Heart left ventricle (tissue), 16 donors: ENCODE measurements at regions of chr5 and their contacts with region 1.

Region 1: GRCh38 chr5:16446993-16447392 is 18.6 kb downstream of the ZNF622 start:
- DNase-seq: no peak
- ATAC-seq: no peak
- H3K4me3 ChIP-seq: no peak overlapping the region
- H3K27ac ChIP-seq: no peak overlapping the region
- H3K4me1 ChIP-seq: no peaks in the 10 kb centered on the region
- H3K27me3 ChIP-seq: no peaks in the 10 kb centered on the region
- CTCF ChIP-seq: no peak
- POLR2A ChIP-seq: no peak

Region 2: GRCh38 chr5:15510831-15511230 is 936.2 kb before region 1 on chr5:
- intact Hi-C with region 1: no loop called
- DNase-seq: no peak
- ATAC-seq: peak in 1 of 4 donors; percentile 37
- H3K4me3 ChIP-seq: no peak overlapping the region
- H3K27ac ChIP-seq: no peak overlapping the region
- H3K4me1 ChIP-seq: peaks cover 0 to 50% (median 29%) of the 10 kb centered on the region in 12 donors
- H3K27me3 ChIP-seq: no peaks in the 10 kb centered on the region
- CTCF ChIP-seq: no peak
- POLR2A ChIP-seq: no peak

Region 3: GRCh38 chr5:16178745-16179372 is 268.1 kb before region 1 on chr5:
- intact Hi-C with region 1: loop called in 1 of 10 experiments (anchors 10 kb)
- DNase-seq: peak; percentile 60 to 85 (median 78)
- ATAC-seq: peak in 3 of 4 donors; percentile 94 to 98 (median 95)
- H3K4me3 ChIP-seq: peak overlapping the region in 11 of 12 donors; percentile 17 to 55 (median 43)
- H3K27ac ChIP-seq: no peak overlapping the region
- H3K4me1 ChIP-seq: peaks cover 0 to 10% (median 0%) of the 10 kb centered on the region in 12 donors
- H3K27me3 ChIP-seq: peaks cover 5 to 48% (median 21%) of the 10 kb centered on the region in 9 donors
- CTCF ChIP-seq: peak in 3 of 12 donors; percentile 13 to 26 (median 24)
- POLR2A ChIP-seq: no peak